ENCODE measurements at regions of chr6 and their contacts with region 1.

Region 1: GRCh38 chr6:68634726-68635411 is at the start of gene ADGRB3:
- DNase-seq: peak; percentile 93
- H3K4me3 ChIP-seq: peak within 1 kb of the TSS; percentile 64 to 70
- H3K27ac ChIP-seq: peak within 1 kb of the TSS in 1 of 2 experiments; percentile 97; a peak in 2 of 4 replicates
- H3K4me1 ChIP-seq: peaks cover 0 to 12% of the 10 kb centered on the region in 2 experiments; a peak in 2 of 4 replicates
- H3K27me3 ChIP-seq: peaks cover 5% of the 10 kb centered on the region; the same call in 1 of the 2 replicates
- CTCF ChIP-seq: no peak
- EP300 ChIP-seq: no peak; a peak in 1 of 4 replicates
- RAD21 ChIP-seq: peak; percentile 23; the same call in 1 of the 2 replicates
- polyA plus RNA-seq, gene ADGRB3: 0.12 and 0.18 TPM in 2 replicates

Region 2: DNA sequence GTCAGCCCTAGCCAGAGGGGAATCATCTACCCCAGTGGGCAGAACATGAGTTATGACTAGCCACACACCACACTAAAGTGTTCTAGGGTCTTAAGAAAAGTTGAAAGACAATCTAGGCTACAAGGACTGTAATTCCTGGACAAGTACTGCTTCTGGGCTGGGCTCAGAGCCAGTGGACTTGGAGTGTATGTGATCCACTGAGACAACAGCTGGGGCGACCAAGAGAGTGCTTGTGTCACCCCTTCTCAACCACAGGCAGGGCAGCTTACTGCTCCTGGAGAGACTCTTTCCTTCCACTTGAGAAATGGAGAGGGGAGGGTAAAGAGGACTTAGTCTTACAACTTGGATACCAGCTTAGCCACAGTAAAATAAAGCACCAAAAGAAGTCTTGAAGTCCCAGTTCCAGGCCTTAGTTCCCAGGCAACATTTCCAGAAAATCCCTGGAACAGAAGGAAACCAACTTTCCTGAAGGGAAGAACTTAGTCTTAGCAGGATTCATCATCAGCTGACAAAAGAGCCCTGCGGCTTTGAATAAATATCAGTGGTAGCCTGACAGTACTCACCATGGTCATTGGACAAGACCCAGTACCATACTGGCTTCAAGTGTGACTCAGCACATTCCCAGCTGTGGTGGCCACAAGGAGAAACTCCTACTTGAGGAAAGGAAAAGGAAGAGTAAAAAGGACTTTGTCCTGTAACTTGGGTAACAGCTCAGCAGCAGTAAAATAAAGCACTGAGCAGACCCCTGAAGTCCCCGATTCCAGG is 354.9 kb before region 1 on chr6:
- CTCF ChIA-PET with region 1: no interaction called
- POLR2A ChIA-PET with region 1: no interaction called
- DNase-seq: no peak
- H3K4me3 ChIP-seq: no peak overlapping the region
- H3K27ac ChIP-seq: no peak overlapping the region
- H3K4me1 ChIP-seq: no peaks in the 10 kb centered on the region
- H3K27me3 ChIP-seq: no peaks in the 10 kb centered on the region
- CTCF ChIP-seq: no peak
- EP300 ChIP-seq: no peak
- RAD21 ChIP-seq: no peak

Region 3: DNA sequence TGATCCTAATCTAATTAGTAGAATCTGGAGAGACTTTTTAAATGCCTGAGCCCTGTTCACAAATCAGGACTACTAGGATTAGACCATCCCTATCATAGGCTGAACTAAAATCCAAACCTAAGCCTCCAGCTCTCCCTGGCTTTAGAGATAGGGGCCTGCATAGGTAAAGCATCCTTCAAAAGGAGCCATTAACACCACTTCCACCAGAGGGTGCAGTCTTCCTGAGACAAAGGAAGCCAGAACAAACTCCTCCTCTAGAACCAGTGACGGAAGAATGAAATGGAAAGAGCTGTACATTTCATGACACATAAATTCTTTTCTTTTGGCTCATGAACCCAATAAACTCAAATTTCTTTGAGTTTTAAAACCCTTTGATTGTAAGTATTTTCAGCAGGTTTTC is 291.0 kb before region 1 on chr6:
- CTCF ChIA-PET with region 1: interaction called, 12 read pairs
- POLR2A ChIA-PET with region 1: no interaction called
- DNase-seq: peak; percentile 5
- H3K4me3 ChIP-seq: no peak overlapping the region; a peak in 1 of 4 replicates
- H3K27ac ChIP-seq: no peak overlapping the region
- H3K4me1 ChIP-seq: no peaks in the 10 kb centered on the region
- H3K27me3 ChIP-seq: no peaks in the 10 kb centered on the region
- CTCF ChIP-seq: peak; percentile 36
- EP300 ChIP-seq: no peak
- RAD21 ChIP-seq: peak; percentile 70

Region 4: DNA sequence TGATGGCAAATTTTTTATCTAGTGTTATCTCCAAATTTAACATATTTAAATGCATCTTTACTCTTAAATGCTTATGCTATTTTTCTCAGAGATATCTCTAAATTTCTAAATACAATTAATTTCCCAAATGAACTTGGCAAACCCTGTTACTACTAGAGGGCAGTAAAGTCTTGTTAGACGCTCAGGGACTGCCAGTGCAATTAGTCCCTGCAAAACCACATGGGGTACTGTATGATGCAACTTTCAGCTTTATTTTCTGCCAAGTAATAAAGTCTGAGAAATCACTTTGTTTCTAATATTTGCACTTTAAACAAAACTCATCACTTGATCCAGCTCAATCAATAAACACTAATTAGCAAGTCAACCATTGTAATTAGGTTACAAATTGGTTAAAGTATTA is 75.8 kb before region 1 on chr6:
- CTCF ChIA-PET with region 1: interaction called, 10 read pairs
- POLR2A ChIA-PET with region 1: interaction called, 7 read pairs
- DNase-seq: peak; percentile 19
- H3K4me3 ChIP-seq: no peak overlapping the region
- H3K27ac ChIP-seq: no peak overlapping the region; a peak in 2 of 4 replicates
- H3K4me1 ChIP-seq: peaks cover 0 to 2% of the 10 kb centered on the region in 2 experiments; a peak in 2 of 4 replicates
- H3K27me3 ChIP-seq: no peaks in the 10 kb centered on the region
- CTCF ChIP-seq: no peak
- EP300 ChIP-seq: no peak
- RAD21 ChIP-seq: peak; percentile 65

Region 5: DNA sequence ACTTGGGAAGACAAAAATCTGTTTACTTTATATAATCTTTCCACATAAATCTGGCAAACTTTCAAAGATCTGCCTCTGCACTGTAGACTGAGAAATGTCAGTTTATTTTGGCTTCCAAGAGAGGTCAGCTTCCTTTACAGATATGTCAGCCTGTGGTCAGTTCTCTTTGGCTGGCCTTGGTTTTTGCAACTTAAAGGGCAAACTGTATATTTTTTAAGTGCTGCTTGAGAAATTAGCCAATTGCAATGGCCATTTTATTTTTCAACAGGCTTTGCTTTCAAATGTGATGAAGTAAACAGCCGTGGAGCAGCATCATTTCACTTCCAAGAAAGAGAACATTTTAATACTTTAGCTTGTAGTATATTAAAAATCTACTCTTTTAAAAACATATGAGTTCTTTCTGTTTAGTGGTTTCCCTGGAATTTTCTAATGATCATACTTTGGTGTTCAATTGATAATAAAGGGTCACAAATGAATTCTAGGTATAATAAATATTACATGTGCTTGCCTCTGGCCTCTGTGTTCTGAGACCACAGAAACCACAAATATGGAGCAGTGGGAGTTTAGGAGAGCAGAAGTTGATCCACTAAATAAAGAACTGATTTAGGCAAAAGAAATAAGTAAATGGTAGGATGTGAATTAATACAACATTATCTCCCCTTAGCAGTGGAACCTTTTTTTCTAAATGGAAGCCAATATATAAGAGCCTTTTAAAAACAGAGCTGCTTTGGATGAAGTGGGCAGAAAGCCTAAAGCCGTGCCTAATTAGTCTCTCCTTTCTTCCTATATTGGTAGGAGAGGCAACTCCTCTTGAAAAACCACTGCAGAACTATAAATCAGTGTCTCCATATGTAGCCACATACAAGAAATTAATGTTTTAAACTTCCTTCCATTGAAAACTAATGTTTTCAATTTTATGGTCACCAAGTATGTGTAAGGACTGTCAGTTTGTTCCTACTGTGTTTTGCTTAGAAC is 16.4 kb after region 1 on chr6:
- CTCF ChIA-PET with region 1: interaction called, 18 read pairs
- POLR2A ChIA-PET with region 1: no interaction called
- DNase-seq: no peak
- H3K4me3 ChIP-seq: no peak overlapping the region
- H3K27ac ChIP-seq: peak overlapping the region in 1 of 2 experiments; percentile 28; a peak in 2 of 4 replicates
- H3K4me1 ChIP-seq: peaks cover 0 to 8% of the 10 kb centered on the region in 2 experiments; a peak in 3 of 4 replicates
- H3K27me3 ChIP-seq: no peaks in the 10 kb centered on the region
- CTCF ChIP-seq: no peak
- EP300 ChIP-seq: no peak
- RAD21 ChIP-seq: no peak

Region 6: DNA sequence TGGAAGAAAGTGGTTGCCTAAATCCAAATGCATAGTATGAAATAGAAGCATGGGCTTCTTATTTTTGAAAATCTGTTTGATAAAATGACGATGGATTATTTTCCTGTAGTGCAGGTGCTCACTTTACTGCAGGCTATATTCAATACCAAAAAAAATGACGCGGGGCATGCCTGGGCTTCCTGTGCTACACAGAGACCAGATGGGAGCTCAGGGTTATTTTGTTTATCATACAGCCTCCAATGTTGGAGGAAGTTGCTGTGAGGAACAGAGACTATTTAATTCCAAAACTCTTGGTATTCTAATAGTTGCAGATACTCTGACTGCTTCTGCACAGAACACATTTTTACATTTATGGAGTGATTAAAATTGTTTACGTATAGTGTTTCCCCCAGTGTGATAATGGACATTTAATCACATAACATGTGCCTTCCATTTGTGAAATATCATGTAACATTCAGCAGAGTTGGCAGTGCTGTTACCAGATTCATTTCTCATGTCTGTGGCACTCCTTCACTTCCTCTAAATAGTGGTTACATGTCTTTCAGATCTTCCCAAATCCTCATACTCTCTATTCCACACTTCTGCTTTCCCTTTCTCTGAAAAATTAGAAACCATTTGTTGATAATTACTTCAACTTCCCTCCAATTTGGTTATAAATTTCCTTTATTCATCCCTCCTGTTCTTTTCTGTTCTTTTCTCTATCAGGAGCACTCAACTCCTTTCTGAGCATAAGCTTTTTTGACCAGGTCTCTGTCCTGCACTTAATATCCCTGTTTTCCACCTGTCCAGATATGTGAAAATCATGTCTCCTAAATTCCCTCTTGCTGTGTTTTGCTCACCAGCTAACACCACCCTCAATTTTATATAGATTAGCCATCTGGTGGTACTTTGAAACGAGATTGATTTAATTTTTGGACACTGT is 121.8 kb after region 1 on chr6:
- CTCF ChIA-PET with region 1: interaction called, 11 read pairs
- POLR2A ChIA-PET with region 1: no interaction called
- DNase-seq: peak; percentile 13
- H3K4me3 ChIP-seq: no peak overlapping the region
- H3K27ac ChIP-seq: peak overlapping the region in 1 of 2 experiments; percentile 89; a peak in 2 of 4 replicates
- H3K4me1 ChIP-seq: peaks cover 0 to 19% of the 10 kb centered on the region in 2 experiments; a peak in 3 of 4 replicates
- H3K27me3 ChIP-seq: no peaks in the 10 kb centered on the region
- CTCF ChIP-seq: no peak
- EP300 ChIP-seq: peak in 1 of 2 experiments; percentile 71; a peak in 1 of 4 replicates
- RAD21 ChIP-seq: no peak

Region 7: GRCh38 chr6:68778356-68779020 is 143.6 kb after region 1 on chr6:
- CTCF ChIA-PET with region 1: interaction called, 153 read pairs
- POLR2A ChIA-PET with region 1: interaction called, 3 read pairs
- DNase-seq: peak; percentile 30
- H3K4me3 ChIP-seq: peak overlapping the region in 1 of 2 experiments; percentile 31; a peak in 1 of 4 replicates
- H3K27ac ChIP-seq: peak overlapping the region in 1 of 2 experiments; percentile 39; a peak in 2 of 4 replicates
- H3K4me1 ChIP-seq: peaks cover 0 to 13% of the 10 kb centered on the region in 2 experiments; a peak in 2 of 4 replicates
- H3K27me3 ChIP-seq: no peaks in the 10 kb centered on the region
- CTCF ChIP-seq: peak; percentile 65
- EP300 ChIP-seq: no peak
- RAD21 ChIP-seq: peak; percentile 96

Region 8: DNA sequence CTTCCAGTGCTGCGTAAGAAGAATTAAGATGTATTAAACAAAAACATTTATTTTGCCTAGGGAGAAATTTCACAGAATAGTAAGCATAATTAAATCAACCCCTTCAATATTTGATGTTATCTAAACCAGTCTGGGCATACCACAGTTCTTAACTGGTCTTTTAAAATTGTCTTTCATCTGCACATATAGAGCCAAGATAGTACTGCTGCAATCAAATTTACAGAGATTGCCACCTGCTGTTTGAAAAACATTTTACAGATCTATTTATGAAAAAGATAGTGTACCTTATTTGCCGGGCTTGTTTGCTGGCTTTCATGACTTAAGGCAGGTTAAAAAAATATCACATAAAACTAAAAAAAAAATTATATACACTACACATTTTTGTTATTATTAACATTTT is 323.5 kb after region 1 on chr6:
- CTCF ChIA-PET with region 1: interaction called, 21 read pairs
- POLR2A ChIA-PET with region 1: no interaction called
- DNase-seq: peak; percentile 23
- H3K4me3 ChIP-seq: no peak overlapping the region
- H3K27ac ChIP-seq: no peak overlapping the region
- H3K4me1 ChIP-seq: peaks cover 0 to 5% of the 10 kb centered on the region in 2 experiments; a peak in 2 of 4 replicates
- H3K27me3 ChIP-seq: no peaks in the 10 kb centered on the region
- CTCF ChIP-seq: peak; percentile 44
- EP300 ChIP-seq: peak in 1 of 2 experiments; percentile 33; a peak in 1 of 4 replicates
- RAD21 ChIP-seq: peak; percentile 64